ENCODE measurements at regions of chr22 and their contacts with region 1.

Region 1: GRCh38 chr22:30516273-30516672 is 10.8 kb upstream of the SEC14L4 start:
- DNase-seq: no peak
- ATAC-seq: no peak

Region 2: DNA sequence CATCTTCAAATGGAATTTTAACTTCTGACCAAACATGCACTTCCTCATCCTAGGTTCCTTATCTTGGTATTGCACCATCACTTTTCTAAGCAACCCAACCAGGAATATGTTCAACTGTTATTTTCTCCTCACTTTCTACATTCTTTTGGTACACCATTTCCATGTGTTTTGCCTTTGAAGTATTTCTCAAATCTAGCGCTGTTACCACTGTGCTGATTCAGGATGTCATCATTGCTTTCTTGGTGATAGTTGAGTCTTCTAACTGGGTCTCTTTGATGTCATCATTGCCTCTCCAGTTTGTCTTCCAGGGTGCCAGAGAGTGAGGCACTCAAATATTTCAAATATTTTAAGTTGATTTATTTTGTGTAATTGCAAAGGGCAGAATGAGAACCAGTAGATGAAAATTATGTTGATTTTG is 388.5 kb before region 1 on chr22:
- intact Hi-C with region 1: loop called (anchors 5 kb)
- DNase-seq: no peak
- ATAC-seq: no peak